H1 (cell line): ENCODE measurements at regions of chr10 and their contacts with region 1.

Region 1: DNA sequence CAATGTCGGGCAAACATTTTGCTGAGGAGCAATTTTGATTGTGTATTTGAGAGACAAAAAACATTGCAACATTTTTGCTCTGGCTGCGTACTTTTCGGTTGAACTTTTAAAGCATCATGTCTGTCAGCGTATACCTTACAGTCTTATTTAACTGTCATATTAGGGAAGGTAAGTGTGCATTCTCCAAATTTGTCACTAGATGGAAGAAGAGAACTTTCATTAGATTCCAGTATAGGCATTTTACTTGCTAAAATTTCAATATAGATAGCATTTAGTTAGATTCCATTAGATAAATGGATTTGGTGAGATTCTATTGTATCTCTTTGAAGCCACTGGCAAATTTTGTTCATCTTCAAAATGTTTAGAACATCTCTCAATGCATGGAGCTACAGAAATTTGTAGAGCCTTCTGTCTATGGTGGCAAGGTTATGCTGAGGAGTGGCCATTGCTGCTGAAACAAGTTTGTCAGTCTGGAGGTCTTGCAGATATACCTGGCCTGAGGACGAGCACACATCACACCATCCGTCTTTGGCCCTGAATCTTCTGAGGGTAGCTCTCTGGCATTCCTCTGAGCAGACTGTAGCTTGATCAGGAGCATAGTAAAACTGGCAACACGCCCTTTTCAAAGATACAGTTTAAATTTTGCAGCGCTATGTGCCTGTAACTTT is 437.5 kb upstream of the MBL2 start:
- DNase-seq: peak in 1 of 2 experiments; percentile 9
- H3K4me3 ChIP-seq: no peak overlapping the region
- H3K27ac ChIP-seq: no peak overlapping the region; the same call in 1 of the 2 replicates
- H3K4me1 ChIP-seq: peaks cover 0 to 3% (median 0%) of the 10 kb centered on the region in 4 experiments; a peak in 2 of 7 replicates
- H3K27me3 ChIP-seq: no peaks in the 10 kb centered on the region
- CTCF ChIP-seq: peak in 1 of 3 experiments; percentile 56; a peak in 2 of 4 replicates
- EP300 ChIP-seq: no peak
- POLR2A ChIP-seq: no peak
- RAD21 ChIP-seq: peak; percentile 59 to 79

Region 2: GRCh38 chr10:52818019-52818418 is 392.1 kb before region 1 on chr10:
- CTCF ChIA-PET with region 1: interaction called, 12 read pairs
- POLR2A ChIA-PET with region 1: no interaction called
- DNase-seq: peak in 1 of 2 experiments; percentile 39
- H3K4me3 ChIP-seq: no peak overlapping the region
- H3K27ac ChIP-seq: no peak overlapping the region
- H3K4me1 ChIP-seq: peaks cover 0 to 3% (median 1%) of the 10 kb centered on the region in 4 experiments; a peak in 2 of 7 replicates
- H3K27me3 ChIP-seq: no peaks in the 10 kb centered on the region
- CTCF ChIP-seq: peak in 2 of 3 experiments; percentile 58 to 77; a peak in 3 of 4 replicates
- EP300 ChIP-seq: no peak
- POLR2A ChIP-seq: no peak
- RAD21 ChIP-seq: peak; percentile 86 to 92

Region 3: GRCh38 chr10:53223851-53224250 is 13.8 kb after region 1 on chr10:
- CTCF ChIA-PET with region 1: interaction called, 15 read pairs
- POLR2A ChIA-PET with region 1: no interaction called
- DNase-seq: peak in 1 of 2 experiments; percentile 9
- H3K4me3 ChIP-seq: no peak overlapping the region
- H3K27ac ChIP-seq: no peak overlapping the region
- H3K4me1 ChIP-seq: peaks cover 0 to 11% (median 3%) of the 10 kb centered on the region in 4 experiments; a peak in 2 of 7 replicates
- H3K27me3 ChIP-seq: no peaks in the 10 kb centered on the region
- CTCF ChIP-seq: peak in 1 of 3 experiments; percentile 18; a peak in 1 of 4 replicates
- EP300 ChIP-seq: no peak
- POLR2A ChIP-seq: no peak
- RAD21 ChIP-seq: peak; percentile 29 to 44